ENCODE measurements at regions of chr10 and their contacts with region 1.

Region 1: GRCh38 chr10:100878291-100878910 is 34.4 kb upstream of the SLF2 start:
- DNase-seq: peak; percentile 54
- ATAC-seq: peak; percentile 88
- H3K4me3 Mint-ChIP-seq: no peak overlapping the region
- H3K27ac Mint-ChIP-seq: no peak overlapping the region
- H3K4me1 Mint-ChIP-seq: no peaks in the 10 kb centered on the region
- H3K27me3 Mint-ChIP-seq: peaks cover 4% of the 10 kb centered on the region
- CTCF ChIP-seq: peak; percentile 52

Region 2: DNA sequence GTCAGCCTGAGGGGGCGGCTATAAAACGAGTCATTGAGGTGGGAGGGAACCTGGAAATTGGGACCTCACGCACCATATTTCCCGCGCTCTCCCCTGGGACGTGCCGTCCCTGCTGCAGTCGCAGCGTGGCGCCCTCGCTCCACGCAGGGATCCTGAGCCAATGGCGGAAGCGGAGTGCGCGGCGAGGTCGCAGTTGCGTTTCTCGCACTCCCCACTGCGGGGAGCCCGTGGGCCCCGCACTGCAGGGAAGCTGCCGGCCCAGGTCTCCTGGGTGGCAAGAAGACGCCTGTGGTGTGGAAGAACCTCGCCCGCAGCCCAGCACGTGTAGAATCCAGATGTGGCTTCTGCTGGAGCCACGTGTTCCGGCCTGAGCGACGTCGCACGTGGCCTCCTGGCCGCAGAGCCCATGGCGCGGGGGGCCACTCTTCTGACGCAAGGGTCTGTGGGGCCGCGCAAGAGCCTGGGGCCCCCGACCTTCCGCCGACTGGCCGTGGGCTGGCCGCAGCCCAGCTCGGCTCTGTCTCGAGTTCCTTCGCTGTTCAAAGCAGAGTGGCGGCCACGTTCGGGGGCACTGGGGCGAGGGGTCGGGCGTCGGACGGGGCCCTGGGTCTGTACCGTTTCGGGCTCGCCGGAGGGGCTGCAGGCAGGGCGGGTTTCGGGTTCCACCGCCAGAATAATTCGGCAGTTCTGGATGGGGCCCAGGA is 316.2 kb before region 1 on chr10:
- CTCF ChIA-PET with region 1: interaction called, 14 read pairs
- POLR2A ChIA-PET with region 1: no interaction called
- intact Hi-C with region 1: loop called (anchors 5 kb)
- DNase-seq: peak; percentile 83
- ATAC-seq: peak; percentile 97
- H3K4me3 Mint-ChIP-seq: no peak overlapping the region
- H3K27ac Mint-ChIP-seq: no peak overlapping the region
- H3K4me1 Mint-ChIP-seq: peaks cover 9% of the 10 kb centered on the region
- H3K27me3 Mint-ChIP-seq: peaks cover 35% of the 10 kb centered on the region
- CTCF ChIP-seq: peak; percentile 99

Region 3: DNA sequence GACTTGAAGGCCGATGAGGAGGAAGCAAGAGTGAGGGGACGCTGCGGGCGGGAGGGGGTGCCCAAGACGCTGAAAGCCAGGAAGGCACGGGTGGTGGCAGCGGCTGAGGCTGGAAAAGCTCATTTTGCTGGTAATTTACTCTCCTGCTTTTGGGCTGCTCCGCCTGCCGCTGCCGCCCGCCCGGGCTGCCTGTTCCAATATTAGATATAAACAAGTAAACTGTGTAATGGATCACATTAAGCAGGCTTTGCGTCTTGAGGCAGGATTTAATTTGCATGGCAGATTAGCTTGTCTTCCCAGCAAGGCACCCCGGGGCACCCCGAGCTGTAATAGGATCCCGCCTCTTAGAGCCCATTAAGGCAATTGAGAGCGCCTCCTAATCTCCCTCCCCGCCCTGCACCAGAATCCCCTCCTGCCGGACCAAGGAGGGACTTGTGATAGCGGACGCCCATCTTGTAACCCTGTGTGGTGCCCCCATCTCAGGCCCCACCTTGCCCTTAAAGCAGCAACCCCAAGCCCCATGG is 11.8 kb before region 1 on chr10:
- CTCF ChIA-PET with region 1: interaction called, 10 read pairs
- POLR2A ChIA-PET with region 1: no interaction called
- intact Hi-C with region 1: no loop called
- DNase-seq: no peak
- ATAC-seq: no peak
- H3K4me3 Mint-ChIP-seq: no peak overlapping the region
- H3K27ac Mint-ChIP-seq: no peak overlapping the region
- H3K4me1 Mint-ChIP-seq: no peaks in the 10 kb centered on the region
- H3K27me3 Mint-ChIP-seq: peaks cover 31% of the 10 kb centered on the region
- CTCF ChIP-seq: no peak

Region 4: GRCh38 chr10:100888796-100889356 is 10.5 kb after region 1 on chr10:
- CTCF ChIA-PET with region 1: interaction called, 16 read pairs
- POLR2A ChIA-PET with region 1: no interaction called
- intact Hi-C with region 1: no loop called
- DNase-seq: no peak
- ATAC-seq: no peak
- H3K4me3 Mint-ChIP-seq: no peak overlapping the region
- H3K27ac Mint-ChIP-seq: no peak overlapping the region
- H3K4me1 Mint-ChIP-seq: no peaks in the 10 kb centered on the region
- H3K27me3 Mint-ChIP-seq: peaks cover 14% of the 10 kb centered on the region
- CTCF ChIP-seq: peak; percentile 47

Region 5: GRCh38 chr10:100912605-100913469 is 34.4 kb after region 1 on chr10 and contains the start of gene SLF2:
- CTCF ChIA-PET with region 1: no interaction called
- POLR2A ChIA-PET with region 1: no interaction called
- intact Hi-C with region 1: no loop called
- DNase-seq: peak; percentile 97
- ATAC-seq: peak; percentile 97
- H3K4me3 Mint-ChIP-seq: peak within 1 kb of the TSS; percentile 99
- H3K27ac Mint-ChIP-seq: peak within 1 kb of the TSS; percentile 99
- H3K4me1 Mint-ChIP-seq: peaks cover 35% of the 10 kb centered on the region
- H3K27me3 Mint-ChIP-seq: no peaks in the 10 kb centered on the region
- CTCF ChIP-seq: no peak
- total RNA-seq, gene SLF2: 29.0 to 31.9 TPM